PC-3 (cell line): ENCODE measurements at regions of chr1 and their contacts with region 1.

Region 1: DNA sequence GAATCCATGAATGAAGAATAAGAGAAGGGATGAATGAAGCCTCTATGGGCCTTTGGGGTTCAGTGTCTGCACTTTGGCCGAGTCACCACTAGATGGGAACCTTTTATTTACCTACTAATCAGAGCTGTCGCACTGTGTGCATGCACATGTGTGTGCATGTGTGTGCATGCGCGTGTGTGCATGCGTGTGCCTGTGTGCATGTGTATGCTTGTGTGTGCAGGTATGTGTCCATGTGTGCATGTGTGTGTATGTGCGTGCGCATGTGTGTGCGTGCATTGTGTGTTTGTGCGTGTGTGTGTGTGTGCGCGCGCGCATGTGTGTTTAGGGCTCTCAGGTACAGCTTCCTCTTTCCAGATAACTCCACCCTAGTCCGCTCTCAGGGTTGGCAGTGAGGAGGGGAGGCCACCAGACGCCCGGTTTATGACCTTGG is 20.4 kb upstream of the UBXN10 start:
- DNase-seq: peak; percentile 62
- ATAC-seq: peak; percentile 63
- H3K4me3 ChIP-seq: 0 out of 2 replicates have a peak overlapping the region, but pooled peaks have one; percentile 25
- H3K27ac ChIP-seq: peak overlapping the region; percentile 89
- H3K4me1 ChIP-seq: peaks cover 25% of the 10 kb centered on the region
- H3K27me3 ChIP-seq: no peaks in the 10 kb centered on the region
- CTCF ChIP-seq: peak; percentile 72

Region 2: GRCh38 chr1:19514391-19514831 is 651.1 kb before region 1 on chr1:
- CTCF ChIA-PET with region 1: no interaction called
- POLR2A ChIA-PET with region 1: no interaction called
- intact Hi-C with region 1: no loop called
- DNase-seq: no peak
- ATAC-seq: no peak
- H3K4me3 ChIP-seq: no peak overlapping the region
- H3K27ac ChIP-seq: no peak overlapping the region
- H3K4me1 ChIP-seq: no peaks in the 10 kb centered on the region
- H3K27me3 ChIP-seq: no peaks in the 10 kb centered on the region
- CTCF ChIP-seq: no peak

Region 3: GRCh38 chr1:20194757-20195461 is 29.4 kb after region 1 on chr1:
- CTCF ChIA-PET with region 1: interaction called, 4 read pairs
- POLR2A ChIA-PET with region 1: no interaction called
- intact Hi-C with region 1: loop called (anchors 1 kb)
- DNase-seq: peak; percentile 77
- ATAC-seq: peak; percentile 17
- H3K4me3 ChIP-seq: no peak overlapping the region
- H3K27ac ChIP-seq: peak overlapping the region; percentile 65
- H3K4me1 ChIP-seq: peaks cover 46% of the 10 kb centered on the region
- H3K27me3 ChIP-seq: no peaks in the 10 kb centered on the region
- CTCF ChIP-seq: peak; percentile 94

Region 4: GRCh38 chr1:20281801-20282200 is 116.3 kb after region 1 on chr1:
- CTCF ChIA-PET with region 1: no interaction called
- POLR2A ChIA-PET with region 1: interaction called, 10 read pairs
- intact Hi-C with region 1: no loop called
- DNase-seq: peak; percentile 25
- ATAC-seq: no peak
- H3K4me3 ChIP-seq: no peak overlapping the region
- H3K27ac ChIP-seq: no peak overlapping the region
- H3K4me1 ChIP-seq: peaks cover 13% of the 10 kb centered on the region
- H3K27me3 ChIP-seq: no peaks in the 10 kb centered on the region
- CTCF ChIP-seq: no peak